ENCODE measurements at regions of chr15 and their contacts with region 1.

Region 1: GRCh38 chr15:67025719-67026609 is 39.4 kb upstream of the SMAD3 start:
- DNase-seq: peak in 2 of 3 donors; percentile 64 to 70
- H3K4me3 ChIP-seq: peak overlapping the region in 1 of 7 experiments; percentile 11
- H3K27ac ChIP-seq: no peak overlapping the region
- H3K4me1 ChIP-seq: peaks cover 16 to 33% (median 29%) of the 10 kb centered on the region in 4 experiments
- H3K27me3 ChIP-seq: no peaks in the 10 kb centered on the region

Region 2: GRCh38 chr15:67039384-67040075 is 13.6 kb after region 1 on chr15:
- CTCF ChIA-PET with region 1: interaction called, 14 read pairs
- POLR2A ChIA-PET with region 1: no interaction called
- DNase-seq: peak; percentile 44 to 91 (median 83)
- H3K4me3 ChIP-seq: peak overlapping the region in 4 of 7 experiments; percentile 11 to 53 (median 34)
- H3K27ac ChIP-seq: peak overlapping the region in 1 of 2 experiments; percentile 65
- H3K4me1 ChIP-seq: peaks cover 11 to 40% (median 27%) of the 10 kb centered on the region in 4 experiments
- H3K27me3 ChIP-seq: no peaks in the 10 kb centered on the region

Measured in common myeloid progenitor, CD34-positive (primary cell).